Esophagus muscularis mucosa (tissue), 4 donors: ENCODE measurements at regions of chr10 and their contacts with region 1.

Region 1: GRCh38 chr10:80453701-80454513 is at the start of gene TSPAN14:
- DNase-seq: peak; percentile 94
- H3K4me3 ChIP-seq: peak within 1 kb of the TSS; percentile 84 to 99 (median 92)
- H3K27ac ChIP-seq: peak within 1 kb of the TSS; percentile 97 to 99 (median 98)
- H3K4me1 ChIP-seq: peaks cover 39 to 53% (median 47%) of the 10 kb centered on the region in 4 donors
- H3K27me3 ChIP-seq: no peaks in the 10 kb centered on the region
- CTCF ChIP-seq: no peak
- EP300 ChIP-seq: no peak
- POLR2A ChIP-seq: peak; percentile 46
- total RNA-seq, gene TSPAN14: 17.9 to 50.5 (median 38.4) TPM

Region 2: DNA sequence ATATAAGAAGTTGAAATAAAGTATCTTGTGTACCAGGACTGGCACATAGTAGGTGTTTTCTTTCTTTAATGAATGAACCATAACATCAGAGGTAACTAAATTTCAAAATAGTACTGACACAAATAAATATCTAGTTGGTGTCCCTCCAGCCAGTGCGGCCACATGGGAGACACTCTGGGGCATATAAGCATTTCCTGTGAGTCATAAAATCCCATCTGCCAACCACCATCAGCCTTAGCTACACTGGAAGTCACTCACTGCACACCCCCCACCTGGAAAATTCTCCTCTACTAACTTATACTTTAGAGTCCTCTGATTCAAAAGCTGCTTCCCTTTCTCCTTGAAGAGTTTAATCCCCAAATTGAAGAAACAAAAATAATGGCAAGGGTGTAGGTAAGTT is 129.8 kb before region 1 on chr10:
- intact Hi-C with region 1: no loop called
- DNase-seq: no peak
- H3K4me3 ChIP-seq: no peak overlapping the region
- H3K27ac ChIP-seq: no peak overlapping the region
- H3K4me1 ChIP-seq: no peaks in the 10 kb centered on the region
- H3K27me3 ChIP-seq: peaks cover 0 to 11% (median 0%) of the 10 kb centered on the region in 4 donors
- CTCF ChIP-seq: no peak
- EP300 ChIP-seq: no peak
- POLR2A ChIP-seq: no peak

Region 3: DNA sequence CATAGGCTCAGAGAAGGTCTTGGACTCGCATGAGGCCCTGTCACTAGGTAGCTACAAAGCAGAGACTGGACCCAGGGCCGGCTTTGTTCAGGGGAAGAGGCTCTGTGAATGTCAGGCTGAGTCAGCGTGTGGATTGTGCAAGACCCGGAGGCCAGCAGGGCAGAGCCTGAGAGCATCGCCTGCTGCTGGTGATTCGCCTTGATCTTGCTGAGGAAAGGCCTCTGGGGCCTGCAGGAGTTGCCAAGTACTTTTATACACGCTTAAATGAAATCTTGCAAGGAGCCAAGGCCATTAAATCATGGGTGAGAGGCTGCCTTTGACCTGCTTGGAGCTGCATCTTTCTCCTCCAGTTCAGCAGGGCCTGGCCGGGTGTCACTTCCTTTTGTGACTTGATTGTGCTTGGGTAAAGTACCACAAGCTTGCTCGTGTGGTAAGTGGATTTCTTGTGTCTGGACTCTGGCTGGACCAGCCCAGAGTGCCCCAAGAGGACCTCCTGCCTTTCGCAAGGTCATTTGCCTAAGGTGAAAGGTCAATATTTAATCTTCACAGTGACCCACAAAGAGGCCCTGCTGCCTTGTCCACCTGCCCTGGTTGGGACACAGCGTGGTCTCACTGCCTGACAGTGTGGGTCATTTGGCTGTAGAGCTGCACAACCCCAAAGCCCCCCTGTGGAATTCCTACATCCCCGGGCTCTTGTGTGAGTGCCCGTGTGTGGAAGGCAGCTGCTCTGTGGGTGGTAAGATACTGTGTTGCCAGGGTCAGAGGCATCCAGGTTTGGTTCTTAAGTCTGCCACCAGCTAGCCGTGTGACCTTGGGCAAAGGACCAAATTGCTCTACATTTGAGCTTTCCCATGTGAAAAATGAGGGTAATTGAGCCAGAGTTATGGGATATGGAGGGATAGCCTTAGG is 45.2 kb after region 1 on chr10:
- intact Hi-C with region 1: loop called (anchors 2 kb)
- DNase-seq: peak; percentile 97
- H3K4me3 ChIP-seq: no peak overlapping the region
- H3K27ac ChIP-seq: peak overlapping the region; percentile 74 to 80 (median 78)
- H3K4me1 ChIP-seq: peaks cover 85 to 100% (median 94%) of the 10 kb centered on the region in 4 donors
- H3K27me3 ChIP-seq: no peaks in the 10 kb centered on the region
- CTCF ChIP-seq: no peak
- EP300 ChIP-seq: no peak
- POLR2A ChIP-seq: no peak

Region 4: DNA sequence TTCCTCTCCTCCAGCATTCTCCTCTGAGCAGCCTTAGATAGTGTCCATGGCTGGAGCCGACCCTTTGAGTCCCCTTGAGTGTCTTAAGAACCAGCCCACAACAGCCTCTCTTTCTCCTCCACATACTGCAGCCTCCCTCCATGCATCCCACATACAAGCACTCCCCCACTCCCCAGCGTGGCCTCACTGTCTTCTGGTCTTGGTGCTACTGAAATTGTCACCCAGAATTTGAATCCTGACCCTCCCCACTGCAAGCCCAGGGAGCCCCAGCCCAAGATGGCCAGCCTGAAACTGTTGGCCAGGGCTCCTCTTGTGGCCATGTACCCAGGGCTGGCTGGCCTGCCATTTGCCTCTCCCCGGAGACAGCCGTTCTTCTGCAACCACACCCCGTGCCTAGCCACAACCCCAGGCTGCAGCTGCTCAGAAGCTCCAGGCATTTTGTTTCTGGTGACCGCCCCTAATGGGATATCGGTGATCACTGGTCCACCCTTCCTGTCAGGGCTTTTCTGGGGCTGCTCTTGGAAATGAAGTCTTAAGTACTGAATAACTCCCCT is 65.0 kb after region 1 on chr10:
- intact Hi-C with region 1: no loop called
- DNase-seq: no peak
- H3K4me3 ChIP-seq: no peak overlapping the region
- H3K27ac ChIP-seq: peak overlapping the region in 1 of 4 donors; percentile 22
- H3K4me1 ChIP-seq: peaks cover 7 to 23% (median 18%) of the 10 kb centered on the region in 4 donors
- H3K27me3 ChIP-seq: no peaks in the 10 kb centered on the region
- CTCF ChIP-seq: no peak
- EP300 ChIP-seq: no peak
- POLR2A ChIP-seq: no peak

Region 5: GRCh38 chr10:80952436-80952835 is 498.5 kb after region 1 on chr10:
- intact Hi-C with region 1: no loop called
- DNase-seq: no peak
- H3K4me3 ChIP-seq: no peak overlapping the region
- H3K27ac ChIP-seq: no peak overlapping the region
- H3K4me1 ChIP-seq: no peaks in the 10 kb centered on the region
- H3K27me3 ChIP-seq: no peaks in the 10 kb centered on the region
- CTCF ChIP-seq: no peak
- EP300 ChIP-seq: no peak
- POLR2A ChIP-seq: no peak